ENCODE measurements at regions of chr12 and their contacts with region 1.

Region 1: DNA sequence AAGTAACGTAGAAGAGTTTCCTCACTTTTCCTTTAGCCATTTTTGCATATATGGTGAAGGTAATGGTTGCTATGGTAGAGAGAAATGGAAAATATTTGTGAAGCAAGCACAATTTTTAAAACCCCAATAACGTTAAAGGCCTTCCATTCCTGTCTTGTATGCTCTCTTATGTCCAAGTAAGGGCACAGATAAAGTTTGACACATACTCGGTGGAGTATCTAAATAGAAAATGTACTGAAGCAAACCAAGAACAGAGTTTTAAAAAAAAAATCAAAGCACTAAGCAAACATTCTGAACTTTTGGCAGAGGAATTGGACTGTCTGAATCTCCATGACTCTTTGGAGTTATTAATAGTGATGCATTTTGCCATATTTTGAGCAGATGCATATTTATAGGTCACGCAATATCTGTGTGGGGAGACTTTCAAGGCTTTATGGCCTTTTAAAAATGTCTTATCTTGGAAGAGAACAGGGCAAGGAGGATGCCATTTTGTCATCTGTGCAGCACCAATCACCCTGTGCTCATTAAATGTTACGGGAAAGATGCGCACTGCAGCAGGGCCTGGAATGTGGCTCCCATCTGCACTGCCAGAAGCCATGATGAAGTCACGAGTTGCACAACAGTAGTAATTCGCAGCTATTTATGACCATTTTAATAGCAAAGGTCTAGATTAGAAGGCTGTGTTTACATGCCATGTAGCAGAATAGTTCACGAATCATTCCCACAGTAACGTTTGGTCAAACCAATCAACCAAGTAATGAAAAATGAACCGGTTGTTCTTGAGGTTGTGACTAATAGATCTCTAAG is 23.3 kb upstream of the AMIGO2 start:
- DNase-seq: no peak
- ATAC-seq: peak; percentile 75
- H3K4me3 ChIP-seq: no peak overlapping the region
- H3K27ac ChIP-seq: peak overlapping the region; percentile 86 to 94
- H3K4me1 ChIP-seq: peaks cover 0 to 4% of the 10 kb centered on the region in 2 donors
- H3K27me3 ChIP-seq: no peaks in the 10 kb centered on the region

Region 2: DNA sequence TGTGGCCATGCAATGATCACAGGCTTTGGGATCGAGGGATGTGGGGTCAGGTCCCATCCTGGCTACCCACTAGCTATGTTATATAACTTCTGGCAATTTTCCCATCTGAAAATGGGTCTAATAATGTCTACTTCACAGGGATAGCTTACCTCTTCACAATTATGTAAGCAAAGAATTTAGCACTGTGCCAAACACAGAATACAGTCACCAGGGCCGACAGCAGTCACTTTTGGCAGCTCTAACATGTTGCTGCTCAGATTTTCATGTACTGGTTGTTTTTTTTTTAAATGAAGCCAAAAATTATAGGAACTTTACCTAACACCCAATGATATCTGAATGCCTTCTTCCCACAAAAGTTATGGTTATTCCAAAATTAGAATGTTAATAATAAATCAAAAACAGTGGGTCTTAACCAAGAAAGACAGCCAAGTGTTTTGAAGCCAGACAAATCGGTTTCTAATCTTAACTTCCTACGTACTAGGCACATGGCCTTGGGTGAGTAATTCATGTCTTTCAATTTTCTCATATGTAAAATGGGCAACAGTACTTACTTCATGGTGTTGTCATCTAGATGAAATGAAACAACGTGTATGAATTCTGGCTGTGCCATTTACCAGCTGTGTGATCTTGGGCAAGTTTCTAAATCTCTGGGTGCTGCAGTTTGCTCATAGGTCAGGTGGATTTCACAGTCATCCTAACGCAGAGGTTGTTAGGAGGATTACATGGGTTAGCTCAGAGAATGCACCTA is 36.6 kb before region 1 on chr12:
- intact Hi-C with region 1: loop called in 1 of 2 experiments (anchors 5 kb)
- DNase-seq: no peak
- ATAC-seq: peak; percentile 72
- H3K4me3 ChIP-seq: no peak overlapping the region
- H3K27ac ChIP-seq: peak overlapping the region in 1 of 2 donors; percentile 58
- H3K4me1 ChIP-seq: peaks cover 0 to 4% of the 10 kb centered on the region in 2 donors
- H3K27me3 ChIP-seq: no peaks in the 10 kb centered on the region

Region 3: GRCh38 chr12:47085815-47086252 is 17.2 kb before region 1 on chr12:
- intact Hi-C with region 1: loop called in 1 of 2 experiments (anchors 2 kb)
- DNase-seq: no peak
- ATAC-seq: no peak
- H3K4me3 ChIP-seq: no peak overlapping the region
- H3K27ac ChIP-seq: peak overlapping the region in 1 of 2 donors; percentile 59
- H3K4me1 ChIP-seq: peaks cover 3 to 4% of the 10 kb centered on the region in 2 donors
- H3K27me3 ChIP-seq: no peaks in the 10 kb centered on the region